ENCODE measurements at regions of chr12 and their contacts with region 1.

Region 1: DNA sequence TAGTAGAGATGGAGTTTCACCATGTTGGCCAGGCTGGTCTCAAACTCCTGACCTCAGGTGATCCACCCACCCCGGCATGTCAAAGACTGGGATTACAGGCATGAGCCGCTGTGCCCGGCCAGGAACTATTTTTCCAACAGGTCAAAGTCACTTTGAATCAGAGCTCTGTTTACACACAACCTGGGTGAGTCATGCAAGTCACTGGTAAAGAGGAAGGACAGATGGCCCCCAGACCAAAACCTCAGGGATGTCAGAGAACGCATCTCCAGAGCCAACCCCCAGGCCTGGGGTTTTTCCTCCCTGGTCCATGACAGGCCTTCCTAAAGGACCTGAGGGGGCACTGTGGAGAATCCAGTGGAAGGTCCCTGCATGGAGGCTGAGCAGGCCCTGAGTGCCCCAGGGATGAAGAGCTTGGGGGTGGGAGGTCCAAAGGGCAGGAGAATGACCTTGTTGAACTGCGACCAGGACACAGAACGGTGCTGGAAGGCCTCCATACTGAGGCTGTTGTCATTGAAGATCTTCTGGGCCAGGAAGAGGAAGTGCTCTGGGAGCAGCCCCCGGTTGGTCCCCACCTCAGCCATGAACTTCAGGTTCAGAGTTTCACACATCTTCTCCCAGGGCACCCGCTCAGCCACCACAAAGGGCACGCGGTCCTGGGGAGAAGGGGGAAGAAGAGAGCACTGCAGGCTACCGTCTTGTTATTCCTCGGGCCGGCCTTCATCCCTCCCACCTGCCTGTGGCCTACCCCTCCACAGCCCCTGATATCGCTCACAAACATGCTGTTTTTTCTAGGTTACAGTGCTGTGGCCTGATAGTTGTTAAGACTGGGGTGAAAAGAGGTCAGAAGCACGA is 9.1 kb downstream of the STAT6 start:
- DNase-seq: peak; percentile 4
- CTCF ChIP-seq: no peak

Region 2: DNA sequence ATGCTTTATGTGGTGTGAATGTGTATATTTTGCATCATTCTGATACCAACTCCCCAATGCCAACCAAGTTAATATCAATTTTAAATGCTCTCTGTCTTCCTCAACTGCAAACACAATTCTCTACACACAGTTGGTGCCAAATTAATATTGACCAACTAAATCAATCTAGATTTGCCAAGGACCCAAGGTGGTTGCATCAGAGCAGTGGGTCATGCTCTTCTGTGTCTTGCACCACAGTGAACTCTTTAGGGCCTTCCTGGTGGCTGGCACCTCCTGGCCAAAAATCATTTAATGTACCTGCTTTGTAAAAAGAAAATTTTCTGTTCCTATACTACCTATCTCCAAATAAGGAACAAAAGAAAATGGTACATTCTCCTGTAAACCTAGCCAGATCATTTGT is 821.2 kb before region 1 on chr12:
- CTCF ChIA-PET with region 1: no interaction called
- POLR2A ChIA-PET with region 1: no interaction called
- DNase-seq: no peak
- CTCF ChIP-seq: no peak

Region 3: DNA sequence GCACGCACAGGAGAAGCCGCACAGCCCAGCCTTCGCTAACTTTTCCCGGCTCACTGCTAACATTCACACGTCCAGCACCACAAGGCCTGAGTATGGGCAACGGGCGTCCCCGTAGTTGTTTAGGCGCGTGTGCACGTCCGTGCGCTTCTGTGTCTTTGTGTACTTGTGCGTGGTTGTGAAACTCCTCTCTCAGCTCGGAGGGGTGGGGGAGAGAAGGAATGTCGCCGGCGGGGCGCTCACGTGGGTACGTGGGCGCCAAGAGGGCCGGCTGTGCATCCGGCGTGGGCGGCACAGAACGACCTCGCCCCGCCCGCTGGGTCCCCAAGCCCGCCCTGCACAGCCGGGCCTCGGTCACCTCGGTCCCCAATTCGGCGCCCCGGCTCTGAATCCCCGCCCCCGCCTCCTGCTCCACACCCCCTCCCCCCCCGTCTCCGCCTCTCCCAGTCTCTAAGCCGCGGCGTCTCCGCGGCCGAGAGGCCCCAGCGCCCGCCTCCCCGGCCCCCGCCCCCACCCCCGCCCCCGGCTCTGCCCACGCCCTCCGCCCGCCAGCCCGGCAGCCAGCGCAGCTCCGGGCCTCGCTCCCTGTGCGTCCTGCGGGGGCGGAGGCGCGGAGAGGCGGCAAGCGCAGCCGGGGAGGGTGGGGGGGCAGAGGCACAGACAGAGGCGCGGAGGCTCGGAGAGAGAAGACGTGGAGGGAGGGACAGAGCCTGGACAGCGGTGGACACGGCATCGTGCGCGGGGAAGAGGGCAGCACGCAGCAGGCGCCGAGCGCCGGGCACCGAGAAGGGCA is 13.4 kb before region 1 on chr12 and contains the start of gene NAB2:
- CTCF ChIA-PET with region 1: interaction called, 213 read pairs
- POLR2A ChIA-PET with region 1: interaction called, 12 read pairs
- DNase-seq: peak; percentile 92
- CTCF ChIP-seq: no peak